ENCODE measurements at regions of chr4 and their contacts with region 1.

Region 1: DNA sequence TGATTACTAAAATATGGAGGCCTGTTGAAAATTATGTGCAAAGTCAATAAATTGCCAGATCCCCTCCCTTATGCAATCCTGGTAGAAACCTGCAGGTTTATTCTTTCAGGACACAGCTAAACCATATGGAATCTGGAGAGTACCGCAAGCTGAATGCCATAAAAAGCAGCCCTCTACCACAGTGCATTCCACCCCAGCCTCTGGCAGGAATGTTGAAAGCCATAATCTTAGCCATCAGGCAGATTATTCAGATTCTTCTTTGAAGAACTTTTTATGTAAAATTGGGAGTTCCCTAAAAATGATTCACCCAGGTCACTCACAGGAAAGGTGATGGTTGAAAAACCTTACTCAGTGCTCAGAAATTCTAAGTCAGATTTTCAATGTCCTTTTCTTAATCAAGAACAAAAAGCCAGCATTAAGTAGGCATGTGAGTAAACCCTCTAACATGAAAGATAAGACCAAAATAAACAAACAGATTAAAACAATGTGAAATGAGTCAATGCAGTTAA is 227.1 kb downstream of the FSTL5 start:
- DNase-seq: peak; percentile 91
- ATAC-seq: peak; percentile 99
- H3K4me3 ChIP-seq: no peak overlapping the region
- H3K27ac ChIP-seq: peak overlapping the region; percentile 64
- H3K4me1 ChIP-seq: peaks cover 26% of the 10 kb centered on the region
- H3K27me3 ChIP-seq: no peaks in the 10 kb centered on the region
- CTCF ChIP-seq: no peak

Region 2: DNA sequence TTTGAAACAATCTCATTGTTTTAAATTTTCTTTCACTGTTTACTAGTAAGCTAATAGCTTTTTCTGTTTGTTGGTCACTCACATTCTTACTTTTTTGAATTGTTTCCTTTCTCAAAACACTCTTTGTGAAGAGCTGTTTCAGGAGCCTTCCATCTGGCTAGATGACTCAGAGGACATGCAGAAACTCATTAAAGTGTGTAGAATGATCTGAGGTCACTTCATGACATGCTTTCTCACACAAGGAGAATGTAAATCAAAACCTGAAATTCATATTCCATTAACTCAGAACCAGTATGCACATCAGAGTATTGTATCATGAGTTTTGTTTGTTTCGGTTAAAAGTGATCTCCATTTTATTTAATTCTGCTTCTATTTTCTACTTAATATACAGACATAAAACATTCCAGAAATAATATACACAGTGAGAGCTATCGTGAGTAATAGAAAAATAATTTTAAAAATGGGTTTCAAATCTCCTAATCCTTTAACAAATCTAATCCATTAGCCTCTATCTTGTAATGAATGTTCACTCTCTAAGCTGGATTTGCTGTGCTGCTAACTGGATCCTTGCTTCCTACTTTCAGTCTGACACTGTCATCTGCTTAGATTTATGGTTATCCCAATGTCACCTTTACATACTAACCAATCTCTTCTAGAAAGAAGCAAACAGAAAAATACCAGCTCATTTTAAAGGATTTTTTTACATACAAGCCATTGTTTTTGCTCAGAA is 222.5 kb before region 1 on chr4:
- CTCF ChIA-PET with region 1: no interaction called
- POLR2A ChIA-PET with region 1: no interaction called
- intact Hi-C with region 1: loop called (anchors 5 kb)
- DNase-seq: peak; percentile 77
- ATAC-seq: peak; percentile 90
- H3K4me3 ChIP-seq: no peak overlapping the region
- H3K27ac ChIP-seq: peak overlapping the region; percentile 72
- H3K4me1 ChIP-seq: peaks cover 23% of the 10 kb centered on the region
- H3K27me3 ChIP-seq: no peaks in the 10 kb centered on the region
- CTCF ChIP-seq: no peak

Region 3: DNA sequence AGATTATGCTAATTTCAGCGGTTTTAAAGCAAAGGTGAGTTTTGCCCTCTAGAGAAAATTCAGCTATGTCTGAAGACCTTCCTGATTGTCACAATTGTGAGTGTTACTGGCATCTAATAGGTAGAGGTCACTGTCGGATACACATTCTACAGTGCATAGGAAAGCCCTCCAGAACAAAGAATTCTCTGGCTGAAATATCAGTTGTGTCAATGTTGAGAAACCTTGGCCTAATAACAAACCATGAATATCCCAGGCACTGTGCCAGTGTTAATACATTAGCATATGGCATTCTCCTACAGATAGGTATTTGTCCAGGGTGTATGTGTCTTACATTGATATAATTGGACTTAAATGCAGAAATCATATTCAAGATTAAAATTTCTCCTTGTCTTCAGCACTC is 67.2 kb before region 1 on chr4:
- CTCF ChIA-PET with region 1: no interaction called
- POLR2A ChIA-PET with region 1: no interaction called
- intact Hi-C with region 1: loop called (anchors 10 kb)
- DNase-seq: no peak
- ATAC-seq: no peak
- H3K4me3 ChIP-seq: no peak overlapping the region
- H3K27ac ChIP-seq: no peak overlapping the region
- H3K4me1 ChIP-seq: no peaks in the 10 kb centered on the region
- H3K27me3 ChIP-seq: no peaks in the 10 kb centered on the region
- CTCF ChIP-seq: no peak

Measured in PC-3 (cell line).